ENCODE measurements at regions of chr12 and their contacts with region 1.

Region 1: GRCh38 chr12:110600254-110600653 is 13.7 kb upstream of the TCTN1 start:
- DNase-seq: no peak
- ATAC-seq: peak; percentile 61
- H3K4me3 ChIP-seq: no peak overlapping the region
- H3K27ac ChIP-seq: no peak overlapping the region
- H3K4me1 ChIP-seq: peaks cover 13% of the 10 kb centered on the region
- H3K27me3 ChIP-seq: no peaks in the 10 kb centered on the region
- CTCF ChIP-seq: peak; percentile 18 to 69 (median 42); a peak in 4 of 6 replicates
- EP300 ChIP-seq: no peak
- POLR2A ChIP-seq: no peak
- RAD21 ChIP-seq: peak; percentile 85

Region 2: DNA sequence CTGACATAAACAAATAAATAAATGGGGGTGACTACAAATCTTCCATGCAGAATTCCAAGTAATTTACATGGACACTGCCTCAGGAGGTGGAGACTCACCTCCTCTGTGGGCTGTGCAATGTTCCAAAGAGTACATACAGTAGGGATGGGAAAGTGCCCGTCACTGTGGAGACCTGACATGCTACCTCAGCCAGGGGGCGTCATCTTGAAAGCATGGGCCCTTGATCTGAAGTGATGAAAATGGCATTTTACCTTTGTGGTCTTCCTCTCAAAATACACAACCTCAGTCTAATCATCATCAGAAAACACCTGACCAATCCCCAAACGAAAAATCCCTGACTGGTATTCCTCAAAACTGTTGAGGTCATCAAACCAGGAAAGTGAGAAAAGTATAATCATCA is 245.2 kb before region 1 on chr12:
- CTCF ChIA-PET with region 1: interaction called, 16 read pairs
- POLR2A ChIA-PET with region 1: no interaction called
- RAD21 ChIA-PET with region 1: interaction called, 4 read pairs
- SMC1A ChIA-PET with region 1: interaction called, 3 read pairs
- in situ Hi-C with region 1: no loop called
- intact Hi-C with region 1: loop called (anchors 5 kb)
- DNase-seq: no peak
- ATAC-seq: peak; percentile 85
- H3K4me3 ChIP-seq: no peak overlapping the region
- H3K27ac ChIP-seq: no peak overlapping the region
- H3K4me1 ChIP-seq: no peaks in the 10 kb centered on the region; the same call in 1 of the 2 replicates
- H3K27me3 ChIP-seq: no peaks in the 10 kb centered on the region
- CTCF ChIP-seq: peak; percentile 63 to 71 (median 66); a peak in 5 of 6 replicates
- EP300 ChIP-seq: no peak
- POLR2A ChIP-seq: no peak
- RAD21 ChIP-seq: peak; percentile 57

Region 3: DNA sequence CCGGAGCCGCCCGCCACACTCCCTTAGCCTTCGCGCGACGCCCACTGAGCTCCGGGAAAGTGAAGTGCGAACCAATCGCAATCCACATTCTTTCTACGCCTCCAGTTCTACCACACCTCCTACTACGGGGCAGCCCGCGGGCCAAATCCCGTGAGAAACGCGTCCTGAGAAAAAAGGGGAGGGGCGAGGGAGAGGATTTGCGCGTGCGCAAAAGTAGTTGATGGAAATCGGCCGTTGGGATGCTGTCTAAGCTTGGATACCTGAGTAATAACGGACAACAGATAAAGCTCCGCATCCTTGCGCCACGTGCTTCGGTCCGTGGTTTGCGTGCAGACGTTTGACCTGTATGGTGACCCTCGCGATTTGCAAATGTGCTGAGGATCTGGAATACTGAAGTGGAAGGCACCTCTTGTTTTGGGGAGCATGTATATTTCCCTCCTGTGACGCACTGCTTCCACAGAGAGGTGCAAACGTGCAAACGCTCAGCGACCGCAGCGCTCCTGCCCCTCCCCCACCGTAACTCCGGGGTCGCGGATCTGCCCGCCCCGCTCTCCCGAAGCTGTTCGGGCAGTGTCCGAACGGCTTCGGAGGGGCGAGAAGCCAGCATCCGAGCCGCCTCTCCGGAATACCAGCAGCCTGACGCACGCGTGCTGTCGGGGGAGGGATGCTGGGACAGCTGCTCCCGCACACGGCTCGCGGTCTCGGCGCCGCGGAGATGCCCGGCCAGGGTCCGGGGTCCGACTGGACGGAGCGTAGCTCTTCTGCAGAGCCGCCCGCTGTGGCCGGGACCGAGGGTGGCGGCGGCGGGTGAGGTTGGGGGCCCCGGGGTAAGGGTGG is 131.8 kb before region 1 on chr12 and contains the starts of genes FAM216A and GPN3:
- CTCF ChIA-PET with region 1: interaction called, 130 read pairs
- POLR2A ChIA-PET with region 1: interaction called, 7 read pairs
- RAD21 ChIA-PET with region 1: interaction called, 92 read pairs
- SMC1A ChIA-PET with region 1: interaction called, 99 read pairs
- in situ Hi-C with region 1: loop called (anchors 5 kb)
- intact Hi-C with region 1: loop called (anchors 5 kb)
- DNase-seq: peak; percentile 96
- ATAC-seq: peak; percentile 88
- H3K4me3 ChIP-seq: peak within 1 kb of the TSS; percentile 73
- H3K27ac ChIP-seq: peak within 1 kb of the TSS; percentile 91
- H3K4me1 ChIP-seq: peaks cover 6% of the 10 kb centered on the region
- H3K27me3 ChIP-seq: no peaks in the 10 kb centered on the region
- CTCF ChIP-seq: no peak
- EP300 ChIP-seq: no peak
- POLR2A ChIP-seq: peak; percentile 91
- RAD21 ChIP-seq: no peak
- polyA plus RNA-seq, gene FAM216A: 15.0 to 36.0 TPM
- polyA plus RNA-seq, gene GPN3: 76.9 to 78.7 TPM

Region 4: GRCh38 chr12:110531741-110532333 is 68.4 kb before region 1 on chr12:
- CTCF ChIA-PET with region 1: interaction called, 52 read pairs
- POLR2A ChIA-PET with region 1: interaction called, 4 read pairs
- RAD21 ChIA-PET with region 1: interaction called, 36 read pairs
- SMC1A ChIA-PET with region 1: interaction called, 62 read pairs
- in situ Hi-C with region 1: no loop called
- intact Hi-C with region 1: no loop called
- DNase-seq: peak; percentile 96
- ATAC-seq: peak; percentile 90
- H3K4me3 ChIP-seq: peak overlapping the region; percentile 18
- H3K27ac ChIP-seq: peak overlapping the region; percentile 80
- H3K4me1 ChIP-seq: peaks cover 71% of the 10 kb centered on the region
- H3K27me3 ChIP-seq: no peaks in the 10 kb centered on the region
- CTCF ChIP-seq: no peak
- EP300 ChIP-seq: peak; percentile 95 to 96
- POLR2A ChIP-seq: no peak; the same call in 1 of the 2 replicates
- RAD21 ChIP-seq: no peak

Region 5: GRCh38 chr12:110563702-110564640 is 36.3 kb before region 1 on chr12:
- CTCF ChIA-PET with region 1: interaction called, 19 read pairs
- POLR2A ChIA-PET with region 1: no interaction called
- RAD21 ChIA-PET with region 1: interaction called, 5 read pairs
- SMC1A ChIA-PET with region 1: interaction called, 11 read pairs
- in situ Hi-C with region 1: no loop called
- intact Hi-C with region 1: no loop called
- DNase-seq: no peak
- ATAC-seq: peak; percentile 10; the same call in 1 of the 3 replicates
- H3K4me3 ChIP-seq: no peak overlapping the region
- H3K27ac ChIP-seq: peak overlapping the region; percentile 33; the same call in 1 of the 2 replicates
- H3K4me1 ChIP-seq: peaks cover 20% of the 10 kb centered on the region; the same call in 1 of the 2 replicates
- H3K27me3 ChIP-seq: no peaks in the 10 kb centered on the region
- CTCF ChIP-seq: no peak
- EP300 ChIP-seq: no peak
- POLR2A ChIP-seq: no peak
- RAD21 ChIP-seq: no peak

Region 6: GRCh38 chr12:110619534-110619953 is 19.3 kb after region 1 on chr12:
- CTCF ChIA-PET with region 1: interaction called, 11 read pairs
- POLR2A ChIA-PET with region 1: interaction called, 12 read pairs
- RAD21 ChIA-PET with region 1: interaction called, 13 read pairs
- SMC1A ChIA-PET with region 1: interaction called, 22 read pairs
- in situ Hi-C with region 1: no loop called
- intact Hi-C with region 1: no loop called
- DNase-seq: peak; percentile 80
- ATAC-seq: peak; percentile 91
- H3K4me3 ChIP-seq: peak overlapping the region; percentile 75
- H3K27ac ChIP-seq: peak overlapping the region; percentile 61
- H3K4me1 ChIP-seq: peaks cover 25% of the 10 kb centered on the region
- H3K27me3 ChIP-seq: no peaks in the 10 kb centered on the region
- CTCF ChIP-seq: peak; percentile 40 to 81 (median 46); a peak in 5 of 6 replicates
- EP300 ChIP-seq: peak; percentile 60 to 94
- POLR2A ChIP-seq: no peak
- RAD21 ChIP-seq: peak; percentile 76

Region 7: GRCh38 chr12:110698171-110698902 is 98.1 kb after region 1 on chr12:
- CTCF ChIA-PET with region 1: interaction called, 54 read pairs
- POLR2A ChIA-PET with region 1: interaction called, 6 read pairs
- RAD21 ChIA-PET with region 1: interaction called, 15 read pairs
- SMC1A ChIA-PET with region 1: interaction called, 34 read pairs
- in situ Hi-C with region 1: no loop called
- intact Hi-C with region 1: loop called (anchors 1 kb)
- DNase-seq: peak; percentile 90
- ATAC-seq: peak; percentile 99
- H3K4me3 ChIP-seq: no peak overlapping the region
- H3K27ac ChIP-seq: peak overlapping the region; percentile 64
- H3K4me1 ChIP-seq: peaks cover 29% of the 10 kb centered on the region
- H3K27me3 ChIP-seq: no peaks in the 10 kb centered on the region
- CTCF ChIP-seq: peak; percentile 88 to 90 (median 89)
- EP300 ChIP-seq: no peak
- POLR2A ChIP-seq: no peak
- RAD21 ChIP-seq: peak; percentile 92

Region 8: GRCh38 chr12:111320233-111321050 is 720.2 kb after region 1 on chr12:
- CTCF ChIA-PET with region 1: no interaction called
- POLR2A ChIA-PET with region 1: no interaction called
- RAD21 ChIA-PET with region 1: no interaction called
- SMC1A ChIA-PET with region 1: no interaction called
- in situ Hi-C with region 1: no loop called
- intact Hi-C with region 1: no loop called
- DNase-seq: no peak
- ATAC-seq: no peak
- H3K4me3 ChIP-seq: no peak overlapping the region
- H3K27ac ChIP-seq: no peak overlapping the region
- H3K4me1 ChIP-seq: no peaks in the 10 kb centered on the region
- H3K27me3 ChIP-seq: no peaks in the 10 kb centered on the region
- CTCF ChIP-seq: no peak
- EP300 ChIP-seq: no peak
- POLR2A ChIP-seq: no peak
- RAD21 ChIP-seq: no peak

Measured in GM12878 (cell line).